ENCODE measurements at regions of chr19 and their contacts with region 1.

Region 1: GRCh38 chr19:50147462-50148423 is 15.3 kb downstream of the IZUMO2 start:
- H3K4me3 ChIP-seq: peak overlapping the region; percentile 69
- H3K27ac ChIP-seq: peak overlapping the region; percentile 67; the same call in 1 of the 2 replicates
- H3K4me1 ChIP-seq: peaks cover 3% of the 10 kb centered on the region; the same call in 1 of the 2 replicates
- CTCF ChIP-seq: peak; percentile 96

Region 2: GRCh38 chr19:50167314-50167721 is 19.6 kb after region 1 on chr19:
- CTCF ChIA-PET with region 1: interaction called, 21 read pairs
- POLR2A ChIA-PET with region 1: no interaction called
- H3K4me3 ChIP-seq: no peak overlapping the region
- H3K27ac ChIP-seq: no peak overlapping the region
- H3K4me1 ChIP-seq: peaks cover 5% of the 10 kb centered on the region; the same call in 1 of the 2 replicates
- CTCF ChIP-seq: no peak

Region 3: GRCh38 chr19:50173140-50173539 is 25.4 kb after region 1 on chr19:
- CTCF ChIA-PET with region 1: interaction called, 14 read pairs
- POLR2A ChIA-PET with region 1: interaction called, 3 read pairs
- H3K4me3 ChIP-seq: no peak overlapping the region
- H3K27ac ChIP-seq: peak overlapping the region; percentile 49; the same call in 1 of the 2 replicates
- H3K4me1 ChIP-seq: peaks cover 4% of the 10 kb centered on the region; the same call in 1 of the 2 replicates
- CTCF ChIP-seq: no peak

Region 4: DNA sequence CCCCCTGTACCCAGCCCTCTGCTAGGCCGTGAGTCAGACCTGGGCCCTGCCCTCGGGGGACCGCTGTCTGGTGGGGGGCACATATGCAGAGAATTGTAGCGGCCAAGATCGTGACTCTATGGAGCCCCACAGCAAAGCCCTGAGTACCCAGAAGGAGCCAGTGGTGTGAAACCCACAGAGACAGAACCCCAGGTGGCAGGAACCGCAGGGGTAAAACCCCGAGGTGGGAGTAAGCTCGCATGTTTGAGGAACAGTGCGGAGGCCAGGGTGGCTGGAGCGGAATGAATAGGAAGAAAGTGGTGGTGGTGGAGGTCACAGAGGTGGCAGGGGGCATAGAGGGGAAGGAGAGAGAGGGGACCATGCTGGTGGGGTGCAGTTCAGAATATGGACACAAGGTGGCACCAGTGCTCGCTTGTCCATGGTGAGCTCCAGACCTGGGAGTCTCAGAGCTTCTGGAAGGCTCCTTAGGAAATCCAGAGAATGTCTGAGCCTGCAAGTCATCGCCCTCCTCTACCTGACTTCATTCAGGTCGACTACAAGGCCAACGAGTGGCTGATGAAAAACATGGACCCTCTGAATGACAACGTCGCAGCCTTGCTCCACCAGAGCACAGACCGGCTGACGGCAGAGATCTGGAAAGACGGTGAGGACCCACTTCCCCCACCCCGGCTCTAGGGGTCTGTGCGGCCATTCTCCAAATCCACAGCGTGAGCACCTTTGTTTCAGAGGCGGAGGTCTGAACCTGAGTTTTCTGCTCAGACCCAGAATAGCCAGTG is 104.6 kb after region 1 on chr19:
- CTCF ChIA-PET with region 1: interaction called, 35 read pairs
- POLR2A ChIA-PET with region 1: no interaction called
- H3K4me3 ChIP-seq: no peak overlapping the region
- H3K27ac ChIP-seq: no peak overlapping the region
- H3K4me1 ChIP-seq: no peaks in the 10 kb centered on the region
- CTCF ChIP-seq: 0 out of 2 replicates have a peak, but pooled peaks have one; percentile 24

Region 5: GRCh38 chr19:50258918-50259372 is 111.2 kb after region 1 on chr19:
- CTCF ChIA-PET with region 1: interaction called, 35 read pairs
- POLR2A ChIA-PET with region 1: no interaction called
- H3K4me3 ChIP-seq: no peak overlapping the region
- H3K27ac ChIP-seq: no peak overlapping the region
- H3K4me1 ChIP-seq: no peaks in the 10 kb centered on the region
- CTCF ChIP-seq: peak; percentile 25; the same call in 1 of the 2 replicates

Measured in HEK293 (cell line).